ENCODE measurements at regions of chr2 and their contacts with region 1.

Region 1: GRCh38 chr2:16773080-16773713 is 107.6 kb upstream of the CYRIA start:
- DNase-seq: peak in 1 of 2 experiments; percentile 62
- H3K4me3 ChIP-seq: no peak overlapping the region
- H3K27ac ChIP-seq: no peak overlapping the region
- H3K4me1 ChIP-seq: peaks cover 0 to 12% (median 3%) of the 10 kb centered on the region in 4 experiments; a peak in 2 of 7 replicates
- H3K27me3 ChIP-seq: no peaks in the 10 kb centered on the region
- CTCF ChIP-seq: peak; percentile 53 to 79 (median 72)
- EP300 ChIP-seq: no peak
- POLR2A ChIP-seq: no peak
- RAD21 ChIP-seq: peak; percentile 96 to 98

Region 2: DNA sequence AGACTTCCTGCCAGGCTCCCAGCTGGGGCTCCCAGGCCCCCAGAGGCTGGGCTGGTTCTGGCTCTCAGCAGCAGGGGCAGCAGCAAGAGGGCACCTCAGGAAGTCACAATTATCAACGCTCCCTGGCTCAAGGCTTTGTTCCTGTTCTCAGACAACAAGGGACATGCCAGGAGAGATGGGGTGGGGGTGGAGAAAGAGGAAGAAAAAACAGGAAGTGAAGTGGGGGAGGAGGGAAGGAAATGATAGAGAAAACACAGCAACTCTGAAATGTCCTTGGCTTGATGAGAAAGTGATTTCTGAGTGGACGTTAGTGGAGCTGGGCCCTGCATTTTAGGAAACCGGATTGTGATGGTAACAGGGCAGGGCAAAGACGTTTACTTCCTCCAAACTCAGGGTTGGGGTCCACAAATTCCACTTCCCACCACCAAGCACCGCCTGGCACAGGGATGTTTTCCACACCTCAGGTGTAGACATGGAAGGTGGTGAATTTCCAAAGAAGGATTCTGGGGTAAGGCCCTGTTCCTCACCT is 147.9 kb before region 1 on chr2:
- CTCF ChIA-PET with region 1: no interaction called
- POLR2A ChIA-PET with region 1: no interaction called
- DNase-seq: no peak
- H3K4me3 ChIP-seq: no peak overlapping the region
- H3K27ac ChIP-seq: no peak overlapping the region
- H3K4me1 ChIP-seq: peaks cover 0 to 6% (median 4%) of the 10 kb centered on the region in 4 experiments; a peak in 5 of 7 replicates
- H3K27me3 ChIP-seq: no peaks in the 10 kb centered on the region
- CTCF ChIP-seq: no peak
- EP300 ChIP-seq: no peak
- POLR2A ChIP-seq: no peak
- RAD21 ChIP-seq: no peak

Region 3: DNA sequence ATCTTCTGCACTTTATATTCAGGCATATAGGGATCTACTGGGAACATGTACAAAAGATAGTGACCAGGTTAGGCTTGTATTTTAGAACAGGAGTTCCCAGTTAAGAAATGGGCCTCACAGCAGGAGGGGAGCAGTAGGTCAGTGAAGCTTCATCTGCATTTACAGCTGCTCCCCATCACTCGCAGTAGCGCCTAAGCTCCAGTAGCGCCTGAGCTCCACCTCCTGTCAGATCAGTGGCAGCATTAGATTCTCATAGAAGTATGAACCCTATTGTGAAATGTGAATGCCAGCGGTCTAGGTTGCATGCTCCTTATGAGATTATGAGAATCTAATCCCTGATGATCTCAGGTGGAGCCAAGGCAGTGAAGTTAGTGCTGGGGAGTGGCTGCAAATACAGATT is 116.9 kb after region 1 on chr2:
- CTCF ChIA-PET with region 1: interaction called, 55 read pairs
- POLR2A ChIA-PET with region 1: no interaction called
- DNase-seq: peak; percentile 31 to 48
- H3K4me3 ChIP-seq: no peak overlapping the region
- H3K27ac ChIP-seq: no peak overlapping the region
- H3K4me1 ChIP-seq: no peaks in the 10 kb centered on the region; a peak in 1 of 7 replicates
- H3K27me3 ChIP-seq: no peaks in the 10 kb centered on the region
- CTCF ChIP-seq: peak; percentile 25 to 59 (median 59)
- EP300 ChIP-seq: no peak
- POLR2A ChIP-seq: no peak
- RAD21 ChIP-seq: peak; percentile 78 to 79

Region 4: GRCh38 chr2:17148407-17149145 is 375.4 kb after region 1 on chr2:
- CTCF ChIA-PET with region 1: interaction called, 15 read pairs
- POLR2A ChIA-PET with region 1: no interaction called
- DNase-seq: peak; percentile 21 to 56
- H3K4me3 ChIP-seq: no peak overlapping the region
- H3K27ac ChIP-seq: no peak overlapping the region
- H3K4me1 ChIP-seq: peaks cover 0 to 3% (median 0%) of the 10 kb centered on the region in 4 experiments; a peak in 2 of 7 replicates
- H3K27me3 ChIP-seq: no peaks in the 10 kb centered on the region
- CTCF ChIP-seq: peak; percentile 54 to 65 (median 60)
- EP300 ChIP-seq: no peak
- POLR2A ChIP-seq: no peak
- RAD21 ChIP-seq: peak; percentile 71 to 73

Region 5: GRCh38 chr2:17272652-17273525 is 499.7 kb after region 1 on chr2:
- CTCF ChIA-PET with region 1: no interaction called
- POLR2A ChIA-PET with region 1: no interaction called
- DNase-seq: no peak
- H3K4me3 ChIP-seq: no peak overlapping the region
- H3K27ac ChIP-seq: no peak overlapping the region
- H3K4me1 ChIP-seq: no peaks in the 10 kb centered on the region
- H3K27me3 ChIP-seq: no peaks in the 10 kb centered on the region
- CTCF ChIP-seq: no peak
- EP300 ChIP-seq: no peak
- POLR2A ChIP-seq: no peak
- RAD21 ChIP-seq: no peak

Region 6: GRCh38 chr2:17309741-17310339 is 536.6 kb after region 1 on chr2:
- CTCF ChIA-PET with region 1: interaction called, 42 read pairs
- POLR2A ChIA-PET with region 1: no interaction called
- DNase-seq: peak in 1 of 2 experiments; percentile 25
- H3K4me3 ChIP-seq: no peak overlapping the region
- H3K27ac ChIP-seq: no peak overlapping the region
- H3K4me1 ChIP-seq: peaks cover 0 to 3% (median 1%) of the 10 kb centered on the region in 4 experiments; a peak in 3 of 7 replicates
- H3K27me3 ChIP-seq: no peaks in the 10 kb centered on the region
- CTCF ChIP-seq: peak; percentile 43 to 89 (median 71)
- EP300 ChIP-seq: no peak
- POLR2A ChIP-seq: no peak
- RAD21 ChIP-seq: peak; percentile 88 to 89

Region 7: DNA sequence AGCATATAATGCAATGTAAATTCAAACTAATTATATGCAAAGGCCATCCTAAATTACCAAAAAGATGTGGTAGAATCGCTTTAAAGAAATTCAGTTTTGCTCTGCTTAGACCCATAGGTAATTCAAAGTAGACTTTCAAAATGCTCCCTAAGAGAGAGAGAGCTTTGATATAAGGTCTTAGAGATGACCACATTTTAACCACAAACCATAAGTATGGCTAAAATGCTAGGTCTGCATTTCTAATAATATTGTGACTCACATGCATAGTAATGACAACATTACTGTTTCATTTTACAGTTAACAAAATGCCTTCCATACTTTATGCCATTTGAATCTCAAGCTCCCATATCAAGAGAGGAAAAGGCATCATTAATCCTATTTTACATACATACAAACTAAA is 600.5 kb after region 1 on chr2:
- CTCF ChIA-PET with region 1: no interaction called
- POLR2A ChIA-PET with region 1: no interaction called
- DNase-seq: no peak
- H3K4me3 ChIP-seq: no peak overlapping the region
- H3K27ac ChIP-seq: no peak overlapping the region
- H3K4me1 ChIP-seq: no peaks in the 10 kb centered on the region
- H3K27me3 ChIP-seq: no peaks in the 10 kb centered on the region
- CTCF ChIP-seq: no peak
- EP300 ChIP-seq: no peak
- POLR2A ChIP-seq: no peak
- RAD21 ChIP-seq: no peak